ENCODE measurements at regions of chr5 and their contacts with region 1.

Region 1: GRCh38 chr5:71475788-71476384 is 20.4 kb downstream of the BDP1 start:
- DNase-seq: peak; percentile 39
- H3K4me3 ChIP-seq: no peak overlapping the region
- H3K27ac ChIP-seq: no peak overlapping the region
- H3K4me1 ChIP-seq: peaks cover 6% of the 10 kb centered on the region
- H3K27me3 ChIP-seq: no peaks in the 10 kb centered on the region
- CTCF ChIP-seq: peak; percentile 65 to 72
- POLR2A ChIP-seq: no peak

Region 2: GRCh38 chr5:71461360-71461759 is 14.5 kb before region 1 on chr5:
- CTCF ChIA-PET with region 1: interaction called, 13 read pairs
- POLR2A ChIA-PET with region 1: no interaction called
- dilution Hi-C with region 1: no loop called
- intact Hi-C with region 1: no loop called
- DNase-seq: no peak
- H3K4me3 ChIP-seq: no peak overlapping the region
- H3K27ac ChIP-seq: no peak overlapping the region
- H3K4me1 ChIP-seq: peaks cover 11% of the 10 kb centered on the region
- H3K27me3 ChIP-seq: no peaks in the 10 kb centered on the region
- CTCF ChIP-seq: no peak
- POLR2A ChIP-seq: no peak

Region 3: DNA sequence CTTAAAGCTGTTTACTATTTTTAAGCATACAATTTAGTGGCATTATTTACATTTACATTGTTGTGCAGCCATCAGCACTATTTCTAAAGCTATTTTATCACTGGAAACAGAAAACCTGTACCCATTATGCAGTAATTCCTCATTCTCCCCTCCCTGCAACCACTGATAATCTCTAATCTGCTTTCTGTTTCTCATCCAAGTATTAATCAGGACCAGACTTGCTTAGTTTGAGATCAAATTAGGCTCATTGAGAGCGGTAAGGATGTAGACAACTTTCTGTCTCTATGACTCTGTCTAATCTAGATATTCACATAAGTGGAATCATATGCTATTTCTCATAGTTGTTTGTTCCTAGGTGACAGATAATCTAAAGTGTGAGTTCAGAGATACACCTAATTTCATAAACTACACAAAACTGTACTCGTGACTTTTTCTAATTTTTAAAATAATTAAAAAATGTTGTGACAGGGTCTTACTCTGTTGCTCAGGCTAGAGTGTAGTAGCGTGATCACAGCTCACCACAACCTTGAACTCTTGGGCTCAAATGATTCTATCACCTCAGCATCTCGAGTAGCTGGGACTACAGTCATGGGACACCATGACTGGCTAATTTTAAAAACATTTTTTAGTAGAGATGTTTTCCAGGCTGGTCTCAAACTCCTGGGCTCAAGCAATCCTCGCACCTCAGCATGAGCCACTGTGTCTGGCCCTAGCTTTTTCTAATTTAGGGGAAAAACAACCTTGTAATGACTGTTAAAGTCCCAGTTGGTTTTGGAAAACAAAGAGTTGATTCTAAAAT is 17.1 kb after region 1 on chr5:
- CTCF ChIA-PET with region 1: interaction called, 22 read pairs
- POLR2A ChIA-PET with region 1: no interaction called
- dilution Hi-C with region 1: no loop called
- intact Hi-C with region 1: no loop called
- DNase-seq: no peak
- H3K4me3 ChIP-seq: no peak overlapping the region
- H3K27ac ChIP-seq: no peak overlapping the region
- H3K4me1 ChIP-seq: no peaks in the 10 kb centered on the region
- H3K27me3 ChIP-seq: no peaks in the 10 kb centered on the region
- CTCF ChIP-seq: no peak
- POLR2A ChIP-seq: no peak

Region 4: DNA sequence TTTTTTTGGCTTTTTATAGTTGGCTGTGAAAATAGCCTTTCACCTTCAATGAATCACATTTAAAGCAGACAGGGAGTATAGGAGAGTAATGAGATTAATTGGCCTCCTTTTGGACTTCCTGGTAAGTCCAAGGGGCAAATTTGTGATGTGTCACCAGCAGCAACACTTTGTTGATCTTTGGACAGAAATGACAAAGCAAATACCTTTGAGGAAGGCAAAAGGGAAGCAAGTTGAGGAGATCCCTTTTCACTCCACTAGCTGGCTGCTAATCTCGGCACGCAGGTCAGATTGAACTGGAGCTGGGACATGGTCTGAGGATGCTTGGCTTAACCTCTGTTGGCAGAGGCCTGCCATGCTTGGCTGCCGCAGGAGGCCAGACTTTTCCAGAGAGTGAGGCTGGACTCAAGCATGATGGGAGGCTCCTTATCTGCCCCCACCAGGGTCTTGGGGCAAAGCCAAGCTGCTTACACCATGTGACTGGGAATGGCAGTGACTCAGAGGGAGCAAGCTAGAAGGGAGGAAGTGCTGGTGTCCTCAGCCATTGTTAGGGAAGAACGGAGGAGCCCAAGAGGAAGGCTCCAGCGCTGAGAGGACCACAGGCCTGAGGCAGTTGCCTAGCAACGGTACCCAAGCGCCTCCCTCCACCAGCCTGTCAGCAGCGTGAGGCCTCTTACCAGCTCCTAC is 456.9 kb after region 1 on chr5:
- CTCF ChIA-PET with region 1: no interaction called
- POLR2A ChIA-PET with region 1: no interaction called
- dilution Hi-C with region 1: no loop called
- intact Hi-C with region 1: no loop called
- DNase-seq: peak; percentile 92
- H3K4me3 ChIP-seq: no peak overlapping the region
- H3K27ac ChIP-seq: peak overlapping the region; percentile 88
- H3K4me1 ChIP-seq: peaks cover 22% of the 10 kb centered on the region
- H3K27me3 ChIP-seq: peaks cover 4 to 7% of the 10 kb centered on the region in 2 experiments
- CTCF ChIP-seq: peak in 1 of 2 donors; percentile 2
- POLR2A ChIP-seq: no peak